ENCODE measurements at regions of chr1 and their contacts with region 1.

Region 1: DNA sequence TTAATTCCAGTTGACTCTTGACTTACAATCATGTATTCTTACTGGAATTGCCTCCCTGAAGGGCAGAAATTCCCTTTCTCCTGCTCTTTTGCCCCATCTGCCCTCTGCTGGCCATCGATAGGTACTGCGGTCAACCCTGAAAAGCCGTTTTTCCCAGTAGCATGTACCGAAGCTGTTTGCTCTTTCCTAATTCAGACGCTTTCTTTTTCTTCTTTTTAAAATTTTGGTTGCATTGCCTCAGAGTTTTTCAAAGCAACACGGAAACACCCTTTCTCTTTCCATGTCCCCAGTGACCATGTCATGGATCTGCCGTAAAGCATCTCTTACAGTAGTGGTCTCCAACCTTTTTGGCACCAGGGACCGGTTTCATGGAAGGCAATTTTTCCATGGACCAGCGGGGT is 164.2 kb upstream of the C1orf21 start:
- DNase-seq: peak; percentile 44 to 63 (median 56)
- ATAC-seq: peak; percentile 90 to 97 (median 94)
- H3K4me3 ChIP-seq: no peak overlapping the region
- H3K27ac ChIP-seq: no peak overlapping the region
- H3K4me1 ChIP-seq: no peaks in the 10 kb centered on the region
- H3K27me3 ChIP-seq: no peaks in the 10 kb centered on the region
- CTCF ChIP-seq: peak; percentile 92 to 96 (median 93)
- POLR2A ChIP-seq: no peak

Region 2: DNA sequence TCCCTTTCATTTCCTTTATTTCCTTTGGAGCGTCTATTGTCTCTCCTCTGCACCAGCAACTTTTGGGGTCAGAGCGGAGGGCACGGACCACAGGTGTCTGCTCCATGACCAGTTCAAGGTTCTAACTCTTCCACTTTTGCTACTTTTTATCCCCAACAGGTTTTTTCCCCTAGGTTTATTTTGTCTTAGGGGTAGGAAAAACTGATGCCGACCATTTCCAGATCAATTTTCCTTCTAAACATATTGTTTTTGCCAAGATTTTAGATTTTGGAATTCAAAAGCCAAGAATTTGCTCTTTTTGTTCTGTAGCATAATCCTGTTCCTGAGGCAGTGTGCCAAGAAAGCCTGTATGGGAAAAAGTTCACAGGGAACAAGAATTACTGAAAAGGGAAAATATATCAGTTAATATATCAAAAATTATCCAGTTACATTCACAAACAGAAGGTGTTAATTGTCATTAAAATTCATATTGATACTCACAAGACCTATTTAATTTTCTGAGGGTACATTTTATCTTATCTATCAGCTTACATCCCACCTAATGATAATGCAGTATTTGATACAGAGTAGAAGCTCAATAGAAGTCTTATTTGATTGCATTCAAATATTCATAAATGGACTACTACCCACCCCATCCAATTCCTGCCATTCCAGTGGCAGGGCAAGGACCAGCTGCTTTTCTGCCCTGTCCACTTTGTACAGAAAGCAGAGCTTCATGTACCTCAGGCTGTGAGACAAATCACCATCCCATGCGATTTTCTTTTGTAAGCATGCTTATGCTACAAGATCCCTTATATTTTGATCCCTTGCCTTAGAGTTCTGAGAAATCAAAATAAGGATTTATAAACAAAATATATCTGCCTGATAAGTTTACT is 139.9 kb before region 1 on chr1:
- intact Hi-C with region 1: loop called (anchors 5 to 10 kb)
- DNase-seq: no peak
- ATAC-seq: no peak
- H3K4me3 ChIP-seq: no peak overlapping the region
- H3K27ac ChIP-seq: no peak overlapping the region
- H3K4me1 ChIP-seq: no peaks in the 10 kb centered on the region
- H3K27me3 ChIP-seq: no peaks in the 10 kb centered on the region
- CTCF ChIP-seq: no peak
- POLR2A ChIP-seq: no peak

Measured in right lobe of liver (tissue), 6 donors.